Endothelial cell of umbilical vein (primary cell): ENCODE measurements at regions of chr6 and their contacts with region 1.

Region 1: DNA sequence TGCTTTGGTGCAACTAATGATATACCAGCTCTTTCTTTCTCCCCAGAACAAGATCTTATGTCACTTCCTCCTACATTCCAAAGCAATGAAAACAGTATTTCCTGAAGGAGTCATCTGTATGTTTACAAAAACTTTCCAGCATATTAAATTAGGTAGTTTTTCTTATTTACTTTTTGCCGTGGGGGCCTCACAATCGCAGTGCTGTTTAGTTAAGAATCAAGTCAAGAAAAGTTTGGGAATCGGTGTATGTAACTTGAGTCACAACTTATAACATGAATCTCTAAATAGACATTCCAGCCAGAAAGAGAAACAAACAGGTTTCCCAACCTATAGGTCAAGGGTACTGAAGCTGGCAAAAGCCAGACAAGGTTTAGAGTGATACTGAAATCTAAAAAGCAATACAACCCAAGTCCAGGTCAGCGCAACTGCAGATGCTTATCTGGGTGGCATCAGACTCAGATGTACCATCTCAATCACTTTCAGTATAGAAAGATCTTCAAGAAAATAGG is 63.7 kb downstream of the IPCEF1 start:
- DNase-seq: peak; percentile 85
- H3K4me3 ChIP-seq: peak overlapping the region in 1 of 3 experiments; percentile 16
- H3K27ac ChIP-seq: peak overlapping the region; percentile 85
- H3K4me1 ChIP-seq: peaks cover 22% of the 10 kb centered on the region
- H3K27me3 ChIP-seq: no peaks in the 10 kb centered on the region
- CTCF ChIP-seq: no peak
- POLR2A ChIP-seq: no peak

Region 2: GRCh38 chr6:154234019-154234772 is 58.7 kb before region 1 on chr6:
- CTCF ChIA-PET with region 1: no interaction called
- POLR2A ChIA-PET with region 1: no interaction called
- dilution Hi-C with region 1: no loop called
- intact Hi-C with region 1: no loop called
- DNase-seq: no peak
- H3K4me3 ChIP-seq: no peak overlapping the region
- H3K27ac ChIP-seq: no peak overlapping the region
- H3K4me1 ChIP-seq: no peaks in the 10 kb centered on the region
- H3K27me3 ChIP-seq: no peaks in the 10 kb centered on the region
- CTCF ChIP-seq: no peak
- POLR2A ChIP-seq: no peak

Region 3: GRCh38 chr6:154247119-154247861 is 45.7 kb before region 1 on chr6:
- CTCF ChIA-PET with region 1: no interaction called
- POLR2A ChIA-PET with region 1: no interaction called
- dilution Hi-C with region 1: no loop called
- intact Hi-C with region 1: loop called (anchors 2 kb)
- DNase-seq: peak; percentile 44
- H3K4me3 ChIP-seq: peak overlapping the region in 2 of 3 experiments; percentile 21 to 45
- H3K27ac ChIP-seq: no peak overlapping the region
- H3K4me1 ChIP-seq: peaks cover 4% of the 10 kb centered on the region
- H3K27me3 ChIP-seq: peaks cover 0 to 3% of the 10 kb centered on the region in 2 experiments
- CTCF ChIP-seq: no peak
- POLR2A ChIP-seq: no peak

Region 4: DNA sequence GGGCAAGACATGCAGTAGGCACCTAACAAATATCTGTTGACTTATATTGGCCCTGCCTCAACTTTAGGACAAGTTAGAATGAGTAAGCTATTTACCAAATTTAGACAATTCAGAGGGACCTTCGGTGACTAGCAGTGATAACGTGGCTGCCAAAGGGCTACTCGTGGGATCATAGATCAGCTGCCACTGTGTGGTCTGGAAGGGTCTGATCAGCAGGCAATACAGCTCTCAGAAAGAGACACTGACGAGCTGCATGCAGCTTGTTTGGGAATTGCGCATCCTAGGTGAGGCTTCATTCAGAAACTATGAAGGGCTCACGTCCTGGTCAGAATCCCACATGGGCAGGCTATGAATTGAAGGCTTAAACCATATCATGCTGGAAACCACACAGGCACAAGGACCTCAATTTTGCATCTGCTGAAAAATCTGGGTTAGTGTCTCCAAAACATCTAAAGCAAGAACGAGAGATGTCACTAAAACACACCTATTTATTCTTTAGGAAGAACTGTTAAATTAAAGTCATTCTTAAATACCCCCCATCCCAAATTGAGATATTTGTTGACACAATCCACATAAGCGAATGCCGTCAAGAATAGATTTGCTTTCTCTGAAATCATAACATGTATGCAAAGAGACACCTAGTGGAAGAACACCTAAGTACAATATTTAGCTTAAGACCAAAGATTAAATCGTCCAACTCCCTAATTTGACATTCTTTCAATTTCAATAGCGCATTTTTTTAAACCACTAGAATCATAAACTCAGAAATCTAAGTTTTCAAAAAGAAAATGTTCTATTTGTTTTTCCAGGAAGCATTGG is 15.9 kb before region 1 on chr6:
- CTCF ChIA-PET with region 1: interaction called, 18 read pairs
- POLR2A ChIA-PET with region 1: no interaction called
- dilution Hi-C with region 1: no loop called
- intact Hi-C with region 1: no loop called
- DNase-seq: peak; percentile 42
- H3K4me3 ChIP-seq: no peak overlapping the region
- H3K27ac ChIP-seq: no peak overlapping the region
- H3K4me1 ChIP-seq: no peaks in the 10 kb centered on the region
- H3K27me3 ChIP-seq: no peaks in the 10 kb centered on the region
- CTCF ChIP-seq: peak; percentile 21 to 37
- POLR2A ChIP-seq: no peak

Region 5: DNA sequence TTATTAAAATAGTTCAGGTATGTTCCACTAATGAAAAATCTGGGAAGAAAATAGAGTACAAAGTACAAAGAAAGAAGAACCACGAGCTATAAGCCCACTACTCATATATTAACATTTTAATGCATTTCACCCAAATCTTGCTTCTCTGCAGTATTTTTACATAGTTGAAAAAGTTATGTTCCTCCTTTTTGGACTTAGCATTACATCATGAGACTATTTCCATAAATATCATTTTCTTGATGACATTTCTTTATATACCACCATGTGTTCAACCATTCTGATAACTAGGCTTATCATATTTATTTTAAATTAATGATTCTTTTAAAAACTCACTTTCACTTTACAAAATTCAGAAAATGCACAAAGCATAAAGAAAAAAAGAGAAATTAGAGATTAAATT is 60.7 kb after region 1 on chr6:
- CTCF ChIA-PET with region 1: interaction called, 3 read pairs
- POLR2A ChIA-PET with region 1: no interaction called
- dilution Hi-C with region 1: no loop called
- intact Hi-C with region 1: loop called (anchors 2 kb)
- DNase-seq: no peak
- H3K4me3 ChIP-seq: no peak overlapping the region
- H3K27ac ChIP-seq: no peak overlapping the region
- H3K4me1 ChIP-seq: no peaks in the 10 kb centered on the region
- H3K27me3 ChIP-seq: no peaks in the 10 kb centered on the region
- CTCF ChIP-seq: no peak
- POLR2A ChIP-seq: no peak

Region 6: DNA sequence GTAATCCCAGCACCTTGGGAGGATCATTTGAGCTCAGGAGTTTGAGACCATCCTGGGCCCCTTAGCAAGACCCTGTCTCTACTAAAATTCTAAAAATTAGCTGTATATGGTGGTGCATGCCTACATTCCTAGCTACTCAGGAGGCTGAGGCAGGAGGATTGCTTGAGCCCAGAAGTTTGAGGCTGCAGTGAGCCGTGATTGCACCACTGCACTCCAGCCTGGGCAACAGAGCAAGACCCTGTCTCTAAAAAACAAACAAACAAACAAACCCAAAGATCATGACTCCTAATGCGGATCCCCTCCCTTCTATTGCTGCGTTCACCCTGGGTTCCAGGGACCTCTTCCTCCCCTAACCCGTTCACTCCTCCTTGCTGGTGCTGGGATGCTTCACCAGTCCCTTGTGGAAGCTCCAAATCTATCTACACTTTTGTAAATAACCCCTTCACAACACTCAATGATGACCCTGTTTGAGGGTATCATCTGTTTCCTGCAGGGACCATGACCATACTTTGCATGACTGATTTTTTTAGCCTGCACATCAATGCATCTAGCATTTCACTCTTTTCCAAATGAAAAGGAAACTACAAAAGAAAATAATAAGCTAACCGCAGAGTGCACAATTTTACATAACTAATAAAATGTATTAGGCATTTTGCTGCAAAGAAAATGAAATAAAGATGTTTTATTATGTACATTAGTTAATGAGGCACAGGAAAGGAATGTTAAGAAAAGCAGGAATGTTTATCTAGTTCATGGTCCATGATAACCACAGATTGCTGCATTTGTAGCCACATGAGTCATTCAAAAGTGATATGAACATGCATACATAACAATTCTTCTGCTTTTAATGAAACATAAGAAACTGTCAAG is 94.1 kb after region 1 on chr6:
- CTCF ChIA-PET with region 1: no interaction called
- POLR2A ChIA-PET with region 1: no interaction called
- dilution Hi-C with region 1: no loop called
- intact Hi-C with region 1: loop called (anchors 1 kb)
- DNase-seq: peak; percentile 82
- H3K4me3 ChIP-seq: no peak overlapping the region
- H3K27ac ChIP-seq: peak overlapping the region; percentile 50
- H3K4me1 ChIP-seq: peaks cover 17% of the 10 kb centered on the region
- H3K27me3 ChIP-seq: no peaks in the 10 kb centered on the region
- CTCF ChIP-seq: no peak
- POLR2A ChIP-seq: no peak

Region 7: GRCh38 chr6:154448448-154449096 is 155.6 kb after region 1 on chr6:
- CTCF ChIA-PET with region 1: interaction called, 4 read pairs
- POLR2A ChIA-PET with region 1: no interaction called
- dilution Hi-C with region 1: no loop called
- intact Hi-C with region 1: loop called (anchors 1 kb)
- DNase-seq: peak; percentile 77
- H3K4me3 ChIP-seq: no peak overlapping the region
- H3K27ac ChIP-seq: no peak overlapping the region
- H3K4me1 ChIP-seq: peaks cover 19% of the 10 kb centered on the region
- H3K27me3 ChIP-seq: no peaks in the 10 kb centered on the region
- CTCF ChIP-seq: peak in 1 of 2 donors; percentile 29
- POLR2A ChIP-seq: no peak

Region 8: GRCh38 chr6:154653853-154654252 is 360.9 kb after region 1 on chr6:
- CTCF ChIA-PET with region 1: no interaction called
- POLR2A ChIA-PET with region 1: no interaction called
- dilution Hi-C with region 1: no loop called
- intact Hi-C with region 1: loop called (anchors 5 kb)
- DNase-seq: peak; percentile 95
- H3K4me3 ChIP-seq: no peak overlapping the region
- H3K27ac ChIP-seq: peak overlapping the region; percentile 92
- H3K4me1 ChIP-seq: peaks cover 29% of the 10 kb centered on the region
- H3K27me3 ChIP-seq: no peaks in the 10 kb centered on the region
- CTCF ChIP-seq: no peak
- POLR2A ChIP-seq: no peak